ENCODE measurements at regions of chr11 and their contacts with region 1.

Region 1: GRCh38 chr11:61187505-61188130 is 15.7 kb upstream of the PGA3 start:
- DNase-seq: peak; percentile 83 to 90 (median 84)
- H3K4me3 ChIP-seq: no peak overlapping the region
- H3K27ac ChIP-seq: no peak overlapping the region
- H3K4me1 ChIP-seq: no peaks in the 10 kb centered on the region
- H3K27me3 ChIP-seq: no peaks in the 10 kb centered on the region

Region 2: GRCh38 chr11:60970369-60970774 is 217.2 kb before region 1 on chr11:
- CTCF ChIA-PET with region 1: interaction called, 18 read pairs
- POLR2A ChIA-PET with region 1: no interaction called
- DNase-seq: peak; percentile 48 to 77 (median 71)
- H3K4me3 ChIP-seq: no peak overlapping the region
- H3K27ac ChIP-seq: no peak overlapping the region
- H3K4me1 ChIP-seq: peaks cover 0 to 20% (median 15%) of the 10 kb centered on the region in 4 experiments
- H3K27me3 ChIP-seq: peaks cover 0 to 3% (median 0%) of the 10 kb centered on the region in 5 experiments

Region 3: DNA sequence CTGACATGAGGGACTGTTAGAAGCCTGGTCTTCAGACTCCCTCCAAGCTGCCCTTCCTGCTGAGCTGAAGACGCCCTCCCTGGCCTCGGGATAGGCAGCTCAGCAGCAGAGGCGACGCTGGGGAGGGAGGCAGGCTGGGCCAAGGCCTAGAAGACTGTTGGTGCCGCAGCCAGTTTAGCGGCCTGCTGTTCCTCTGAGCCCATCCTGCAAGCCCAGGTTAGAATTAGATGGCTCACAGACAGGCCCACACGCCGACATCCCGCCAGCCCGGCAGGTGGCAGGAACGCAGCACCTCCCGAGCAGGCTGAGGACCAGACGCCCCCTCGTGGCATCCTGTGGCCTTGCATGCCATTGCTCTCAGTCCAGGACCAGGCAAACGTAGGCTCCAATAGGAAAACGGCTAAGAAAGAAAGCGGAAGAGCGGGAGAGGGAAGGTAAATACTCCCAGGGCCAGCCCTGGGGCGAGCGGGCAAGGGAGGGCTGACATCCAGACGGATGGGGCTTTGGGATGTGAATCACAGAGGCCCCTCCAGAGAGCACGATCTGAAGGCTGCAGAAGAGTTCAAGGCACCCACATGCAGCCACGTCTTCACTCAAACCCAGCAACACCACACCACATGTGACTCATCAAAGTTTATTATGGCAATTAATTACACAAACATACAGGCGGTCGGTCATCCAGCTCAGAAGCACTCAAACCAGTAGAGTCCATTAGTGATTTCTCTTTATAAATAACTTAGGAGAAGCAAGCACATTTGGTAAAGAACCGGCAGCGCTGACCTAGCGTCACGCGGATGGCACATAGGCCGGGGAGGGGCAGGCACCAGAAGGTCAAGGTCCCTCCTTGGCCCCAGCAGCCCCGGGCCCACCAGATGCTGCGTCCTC is 57.7 kb before region 1 on chr11:
- CTCF ChIA-PET with region 1: interaction called, 109 read pairs
- POLR2A ChIA-PET with region 1: no interaction called
- DNase-seq: peak; percentile 83 to 88 (median 87)
- H3K4me3 ChIP-seq: peak overlapping the region in 3 of 7 experiments; percentile 19 to 50 (median 44)
- H3K27ac ChIP-seq: no peak overlapping the region
- H3K4me1 ChIP-seq: peaks cover 0 to 9% (median 7%) of the 10 kb centered on the region in 4 experiments
- H3K27me3 ChIP-seq: no peaks in the 10 kb centered on the region

Region 4: DNA sequence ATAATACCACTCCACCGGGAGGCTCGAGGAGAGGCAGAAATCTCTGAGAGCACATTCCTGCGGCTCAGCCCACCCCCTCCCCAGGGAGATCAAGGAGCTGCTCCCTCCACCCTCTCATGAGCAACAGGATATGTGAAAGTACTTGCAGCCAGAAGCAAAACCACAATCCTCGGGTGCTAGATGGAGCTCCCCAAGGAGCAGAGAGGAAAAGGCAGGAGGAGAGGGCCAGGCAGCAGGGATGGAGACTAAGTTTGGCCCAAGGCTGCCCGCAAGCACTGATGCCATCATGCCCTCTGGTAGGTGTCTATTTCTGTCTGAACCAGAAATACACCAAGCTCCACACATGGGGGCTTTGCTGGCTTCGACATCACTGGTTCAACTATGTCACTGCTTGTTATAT is 48.7 kb before region 1 on chr11:
- CTCF ChIA-PET with region 1: interaction called, 109 read pairs
- POLR2A ChIA-PET with region 1: no interaction called
- DNase-seq: no peak
- H3K4me3 ChIP-seq: no peak overlapping the region
- H3K27ac ChIP-seq: no peak overlapping the region
- H3K4me1 ChIP-seq: peaks cover 2 to 14% (median 9%) of the 10 kb centered on the region in 4 experiments
- H3K27me3 ChIP-seq: no peaks in the 10 kb centered on the region

Region 5: DNA sequence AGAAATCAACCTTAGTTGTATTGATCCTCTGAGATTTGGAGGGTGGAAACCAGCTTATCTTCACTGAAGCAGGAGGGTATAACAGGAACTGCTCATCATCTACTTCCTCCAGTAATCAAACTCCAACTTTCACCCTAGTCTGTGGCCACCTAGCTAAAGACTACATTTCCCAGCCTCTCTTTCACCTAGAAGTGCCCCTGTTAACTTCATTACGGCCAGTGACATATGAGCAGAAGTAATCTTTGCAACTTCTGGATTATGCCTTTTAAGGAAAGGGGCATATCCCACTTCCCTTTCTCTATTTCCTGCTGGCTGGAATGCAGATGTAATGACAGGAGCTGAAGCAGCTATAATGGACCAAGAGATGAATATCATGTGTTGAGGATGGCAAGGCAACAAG is 18.8 kb before region 1 on chr11:
- CTCF ChIA-PET with region 1: interaction called, 12 read pairs
- POLR2A ChIA-PET with region 1: no interaction called
- DNase-seq: peak in 2 of 3 donors; percentile 28 to 49
- H3K4me3 ChIP-seq: no peak overlapping the region
- H3K27ac ChIP-seq: no peak overlapping the region
- H3K4me1 ChIP-seq: peaks cover 9 to 45% (median 19%) of the 10 kb centered on the region in 4 experiments
- H3K27me3 ChIP-seq: no peaks in the 10 kb centered on the region

Region 6: DNA sequence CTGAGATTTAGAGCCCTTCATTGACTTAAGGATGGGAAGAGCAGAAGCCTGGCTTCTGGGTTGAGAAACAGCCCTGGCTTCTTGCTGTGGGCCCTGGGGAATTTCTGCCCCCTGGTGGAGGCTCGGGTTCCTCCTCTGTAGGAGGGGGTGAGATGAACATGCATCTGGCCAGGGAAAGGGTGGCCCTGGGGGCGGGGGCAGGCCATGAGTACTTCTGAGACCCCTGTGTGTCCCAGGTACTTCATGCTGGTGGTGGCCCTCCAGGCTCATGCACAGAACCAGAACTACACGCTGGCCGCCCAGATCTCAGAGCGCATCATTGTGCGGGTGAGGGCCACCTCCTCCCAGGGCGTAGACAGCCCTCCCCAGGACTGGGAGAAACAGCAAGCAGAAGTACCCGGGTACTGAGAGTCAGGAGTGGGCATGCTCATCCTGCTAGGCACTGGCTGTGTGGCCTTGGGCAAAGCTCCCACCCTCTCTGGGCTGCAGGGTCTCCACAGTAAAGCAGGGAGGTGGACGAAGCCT is 589.0 kb after region 1 on chr11:
- CTCF ChIA-PET with region 1: no interaction called
- POLR2A ChIA-PET with region 1: no interaction called
- DNase-seq: peak; percentile 68 to 81 (median 76)
- H3K4me3 ChIP-seq: no peak overlapping the region
- H3K27ac ChIP-seq: no peak overlapping the region
- H3K4me1 ChIP-seq: peaks cover 0 to 15% (median 12%) of the 10 kb centered on the region in 4 experiments
- H3K27me3 ChIP-seq: peaks cover 0 to 9% (median 0%) of the 10 kb centered on the region in 5 experiments